H1 (cell line): ENCODE measurements at regions of chr6 and their contacts with region 1.

Region 1: DNA sequence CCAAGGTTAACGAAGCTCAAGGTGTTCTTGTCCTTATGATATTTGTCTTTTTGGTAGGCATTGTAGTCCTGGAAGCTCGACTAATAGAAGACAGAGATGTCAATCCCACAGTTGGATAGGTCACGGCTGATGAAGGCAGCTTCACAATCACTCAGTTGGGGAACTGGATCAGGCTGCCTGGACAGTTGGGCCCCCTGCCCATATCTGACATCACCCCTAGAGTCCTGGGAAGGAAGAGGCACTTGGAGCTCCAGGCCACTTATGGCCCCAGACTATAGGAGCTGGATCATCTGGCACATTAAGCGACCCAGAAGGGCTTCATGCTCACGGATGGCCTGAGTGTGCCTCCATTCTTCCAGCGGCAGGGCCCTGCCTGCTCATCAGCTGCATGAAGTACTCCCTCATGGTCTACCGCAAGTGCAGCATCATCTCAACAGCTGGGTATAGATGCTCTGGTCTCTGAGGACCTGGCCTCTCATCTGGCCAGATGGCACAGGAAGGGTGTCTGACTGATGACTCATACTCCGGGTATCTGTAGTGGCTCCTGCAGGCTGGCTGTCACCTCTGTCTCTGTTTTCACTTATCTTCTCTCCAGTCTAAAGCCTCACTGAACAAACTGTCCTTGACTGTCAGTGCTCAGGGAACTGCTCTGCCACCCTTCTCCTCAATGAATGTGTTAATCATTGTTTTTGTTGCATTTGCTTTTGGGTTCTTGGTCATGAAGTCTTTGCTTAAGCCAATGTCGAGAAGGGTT is 29.2 kb upstream of the SSR1 start:
- DNase-seq: no peak
- H3K4me3 ChIP-seq: no peak overlapping the region
- H3K27ac ChIP-seq: no peak overlapping the region
- H3K4me1 ChIP-seq: 0 out of 7 replicates have a peak, but pooled peaks cover 0 to 2% (median 0%) of the 10 kb centered on the region in 4 experiments
- H3K27me3 ChIP-seq: no peaks in the 10 kb centered on the region
- CTCF ChIP-seq: no peak
- EP300 ChIP-seq: no peak
- POLR2A ChIP-seq: no peak
- RAD21 ChIP-seq: no peak

Region 2: GRCh38 chr6:7051233-7052114 is 290.7 kb before region 1 on chr6:
- CTCF ChIA-PET with region 1: no interaction called
- POLR2A ChIA-PET with region 1: no interaction called
- DNase-seq: peak in 1 of 2 experiments; percentile 81
- H3K4me3 ChIP-seq: peak overlapping the region; percentile 75 to 83 (median 78)
- H3K27ac ChIP-seq: no peak overlapping the region
- H3K4me1 ChIP-seq: peaks cover 2 to 5% (median 5%) of the 10 kb centered on the region in 4 experiments; a peak in 4 of 7 replicates
- H3K27me3 ChIP-seq: peaks cover 0 to 16% (median 9%) of the 10 kb centered on the region in 4 experiments; a peak in 5 of 7 replicates
- CTCF ChIP-seq: no peak
- EP300 ChIP-seq: no peak
- POLR2A ChIP-seq: 0 out of 3 replicates have a peak, but pooled peaks of 1 of the 2 experiments have one; percentile 42
- RAD21 ChIP-seq: no peak

Region 3: GRCh38 chr6:7316658-7317533 is 25.3 kb before region 1 on chr6:
- CTCF ChIA-PET with region 1: interaction called, 28 read pairs
- POLR2A ChIA-PET with region 1: no interaction called
- DNase-seq: no peak
- H3K4me3 ChIP-seq: no peak overlapping the region
- H3K27ac ChIP-seq: no peak overlapping the region
- H3K4me1 ChIP-seq: no peaks in the 10 kb centered on the region; a peak in 1 of 7 replicates
- H3K27me3 ChIP-seq: no peaks in the 10 kb centered on the region
- CTCF ChIP-seq: no peak
- EP300 ChIP-seq: no peak
- POLR2A ChIP-seq: no peak
- RAD21 ChIP-seq: no peak

Region 4: DNA sequence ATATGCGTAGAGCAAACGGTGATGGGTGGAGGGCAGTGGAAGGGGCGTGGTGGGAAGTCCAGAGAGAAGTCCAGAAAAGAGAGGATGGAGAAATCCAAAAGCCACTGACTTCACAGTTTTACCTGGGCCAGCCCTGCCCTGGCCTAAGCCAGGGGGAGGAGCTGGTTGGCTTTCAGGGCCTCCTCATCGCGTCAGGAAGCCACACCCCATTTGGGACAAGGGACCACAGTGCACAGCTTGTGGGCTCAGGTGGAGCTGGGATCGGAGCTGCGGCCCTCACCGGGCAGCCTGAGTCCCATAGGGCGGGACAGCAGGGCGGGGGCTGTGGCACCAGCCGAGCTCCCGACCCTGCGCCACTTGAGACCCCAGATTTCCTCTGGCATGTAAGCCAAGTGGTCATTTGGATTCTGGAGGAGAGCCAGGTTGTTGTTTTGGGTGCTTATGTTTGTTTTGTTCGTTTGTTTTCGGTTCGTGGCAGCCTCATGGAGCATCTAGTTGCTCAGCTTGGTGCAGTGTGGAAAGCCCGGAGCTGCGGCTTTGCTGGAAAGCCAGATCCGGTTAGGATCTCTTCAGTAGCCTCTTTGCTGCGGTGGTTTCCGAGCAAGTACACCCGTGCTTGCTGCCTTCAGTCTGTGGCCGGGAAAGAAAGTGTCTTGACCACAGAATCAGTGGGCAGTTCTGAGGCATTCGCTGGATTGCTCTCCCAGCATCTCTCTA is 89.7 kb after region 1 on chr6:
- CTCF ChIA-PET with region 1: no interaction called
- POLR2A ChIA-PET with region 1: no interaction called
- DNase-seq: peak in 1 of 2 experiments; percentile 57
- H3K4me3 ChIP-seq: no peak overlapping the region
- H3K27ac ChIP-seq: no peak overlapping the region
- H3K4me1 ChIP-seq: peaks cover 0 to 9% (median 2%) of the 10 kb centered on the region in 4 experiments; a peak in 2 of 7 replicates
- H3K27me3 ChIP-seq: no peaks in the 10 kb centered on the region
- CTCF ChIP-seq: no peak
- EP300 ChIP-seq: no peak
- POLR2A ChIP-seq: no peak
- RAD21 ChIP-seq: no peak

Region 5: GRCh38 chr6:7758456-7758855 is 416.3 kb after region 1 on chr6:
- CTCF ChIA-PET with region 1: no interaction called
- POLR2A ChIA-PET with region 1: no interaction called
- DNase-seq: no peak
- H3K4me3 ChIP-seq: no peak overlapping the region
- H3K27ac ChIP-seq: no peak overlapping the region
- H3K4me1 ChIP-seq: peaks cover 0 to 3% (median 0%) of the 10 kb centered on the region in 4 experiments; a peak in 1 of 7 replicates
- H3K27me3 ChIP-seq: no peaks in the 10 kb centered on the region; a peak in 1 of 7 replicates
- CTCF ChIP-seq: no peak
- EP300 ChIP-seq: no peak
- POLR2A ChIP-seq: no peak
- RAD21 ChIP-seq: no peak